Common myeloid progenitor, CD34-positive (primary cell): ENCODE measurements at regions of chr11 and their contacts with region 1.

Region 1: GRCh38 chr11:10933455-10934292 is 75.8 kb upstream of the ZBED5 start:
- DNase-seq: peak; percentile 88 to 95 (median 93)
- H3K4me3 ChIP-seq: peak overlapping the region in 6 of 7 experiments; percentile 46 to 79 (median 68)
- H3K27ac ChIP-seq: no peak overlapping the region
- H3K4me1 ChIP-seq: peaks cover 3 to 28% (median 22%) of the 10 kb centered on the region in 4 experiments
- H3K27me3 ChIP-seq: peaks cover 0 to 41% (median 22%) of the 10 kb centered on the region in 5 experiments

Region 2: DNA sequence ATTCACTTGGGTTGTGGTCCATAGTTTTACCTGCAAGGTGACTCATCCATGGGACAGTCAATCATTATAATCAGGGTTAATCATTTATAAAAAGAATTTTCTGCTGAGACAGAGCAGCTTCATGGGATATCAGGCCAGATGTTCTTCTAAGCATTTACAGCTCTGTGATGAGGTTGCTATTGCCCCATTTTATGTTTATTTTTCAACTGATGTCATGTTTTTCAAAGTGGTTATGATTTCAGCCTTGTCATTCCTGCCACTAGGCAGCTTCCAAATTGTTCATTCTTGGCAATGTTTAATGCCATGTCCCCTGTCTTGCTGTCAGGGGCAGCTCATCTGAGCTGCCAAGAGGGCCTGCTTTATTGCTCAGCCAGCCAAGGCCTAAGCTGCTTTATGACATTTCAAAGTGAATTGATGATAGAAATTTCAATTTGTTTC is 39.9 kb before region 1 on chr11:
- CTCF ChIA-PET with region 1: no interaction called
- POLR2A ChIA-PET with region 1: no interaction called
- DNase-seq: no peak
- H3K4me3 ChIP-seq: no peak overlapping the region
- H3K27ac ChIP-seq: no peak overlapping the region
- H3K4me1 ChIP-seq: peaks cover 0 to 6% (median 3%) of the 10 kb centered on the region in 4 experiments
- H3K27me3 ChIP-seq: no peaks in the 10 kb centered on the region

Region 3: GRCh38 chr11:11016068-11016467 is 82.4 kb after region 1 on chr11:
- CTCF ChIA-PET with region 1: interaction called, 83 read pairs
- POLR2A ChIA-PET with region 1: no interaction called
- DNase-seq: no peak
- H3K4me3 ChIP-seq: no peak overlapping the region
- H3K27ac ChIP-seq: no peak overlapping the region
- H3K4me1 ChIP-seq: no peaks in the 10 kb centered on the region
- H3K27me3 ChIP-seq: no peaks in the 10 kb centered on the region

Region 4: GRCh38 chr11:11022125-11022730 is 88.6 kb after region 1 on chr11:
- CTCF ChIA-PET with region 1: interaction called, 170 read pairs
- POLR2A ChIA-PET with region 1: no interaction called
- DNase-seq: peak in 2 of 3 donors; percentile 40 to 61
- H3K4me3 ChIP-seq: no peak overlapping the region
- H3K27ac ChIP-seq: no peak overlapping the region
- H3K4me1 ChIP-seq: no peaks in the 10 kb centered on the region
- H3K27me3 ChIP-seq: peaks cover 0 to 3% (median 0%) of the 10 kb centered on the region in 5 experiments